ENCODE measurements at regions of chr1 and their contacts with region 1.

Region 1: DNA sequence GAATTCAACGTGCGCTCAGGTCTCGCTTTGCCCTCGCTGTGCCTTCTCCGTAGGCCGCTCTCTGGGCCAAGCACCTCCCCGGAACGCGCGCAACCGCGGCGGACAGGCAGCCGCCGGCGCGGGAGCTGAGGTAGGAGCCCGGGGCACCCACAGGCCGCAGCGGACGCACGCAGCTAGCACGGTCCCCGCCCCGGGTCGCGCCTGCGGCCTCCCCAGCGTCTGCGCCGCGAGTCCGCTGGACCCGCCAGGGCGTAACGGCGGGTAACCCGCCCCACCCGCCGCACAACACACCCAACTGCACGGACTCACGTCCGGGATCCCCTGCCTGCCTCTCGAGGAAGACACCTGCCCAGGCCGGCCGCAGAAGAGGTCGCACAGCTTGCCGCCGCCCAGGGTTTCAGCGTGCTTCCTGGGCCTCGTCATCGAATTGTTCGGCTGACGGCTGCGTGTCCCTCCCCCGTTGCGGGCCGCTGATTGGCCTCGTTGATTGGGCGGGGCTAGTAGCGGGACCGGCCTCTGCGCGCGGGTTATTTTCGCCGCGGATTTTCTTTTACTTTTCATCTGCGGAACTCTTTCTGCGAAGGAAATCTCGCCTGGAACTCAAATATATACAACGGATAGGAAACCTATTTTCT is at the start of gene CLCC1:
- DNase-seq: peak; percentile 94
- H3K4me3 Mint-ChIP-seq: peak within 1 kb of the TSS; percentile 86
- H3K27ac Mint-ChIP-seq: peak within 1 kb of the TSS; percentile 83
- H3K4me1 Mint-ChIP-seq: peaks cover 18% of the 10 kb centered on the region
- H3K27me3 Mint-ChIP-seq: no peaks in the 10 kb centered on the region
- CTCF ChIP-seq: no peak
- total RNA-seq, gene CLCC1: 36.6 and 46.3 TPM in 2 replicates

Region 2: DNA sequence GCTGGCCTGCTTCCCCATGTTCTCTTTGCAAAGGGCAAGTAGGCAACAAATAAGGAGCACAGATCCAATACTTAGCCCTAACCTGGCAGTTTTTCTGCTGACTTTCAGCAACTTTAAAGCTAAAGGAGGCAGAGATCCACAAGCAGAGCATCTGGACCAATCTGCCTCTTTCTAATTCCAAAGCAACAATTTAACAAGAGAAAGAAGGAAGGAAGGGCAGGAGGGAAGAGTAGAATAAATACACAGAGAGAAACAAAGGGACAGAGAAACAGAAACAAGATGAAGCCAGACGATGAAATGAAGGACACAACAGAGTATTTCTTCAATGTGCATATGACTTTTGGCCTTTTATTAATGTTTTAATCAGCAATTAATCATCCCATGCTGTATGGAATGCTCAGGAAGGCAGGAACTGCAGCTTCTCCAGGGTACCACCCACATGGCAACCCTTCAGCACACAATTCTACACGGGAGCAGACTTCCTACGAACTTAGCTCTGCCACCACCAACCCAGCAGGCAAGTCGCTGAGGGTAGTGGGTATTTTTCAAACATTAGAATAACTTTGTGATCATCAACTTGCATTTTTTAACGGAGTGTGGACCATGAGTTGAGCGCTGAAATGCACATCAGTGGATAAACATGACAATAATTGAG is 15.2 kb before region 1 on chr1:
- CTCF ChIA-PET with region 1: interaction called, 7 read pairs
- POLR2A ChIA-PET with region 1: interaction called, 33 read pairs
- intact Hi-C with region 1: no loop called
- DNase-seq: no peak
- H3K4me3 Mint-ChIP-seq: no peak overlapping the region
- H3K27ac Mint-ChIP-seq: no peak overlapping the region
- H3K4me1 Mint-ChIP-seq: peaks cover 8% of the 10 kb centered on the region
- H3K27me3 Mint-ChIP-seq: no peaks in the 10 kb centered on the region
- CTCF ChIP-seq: no peak

Region 3: DNA sequence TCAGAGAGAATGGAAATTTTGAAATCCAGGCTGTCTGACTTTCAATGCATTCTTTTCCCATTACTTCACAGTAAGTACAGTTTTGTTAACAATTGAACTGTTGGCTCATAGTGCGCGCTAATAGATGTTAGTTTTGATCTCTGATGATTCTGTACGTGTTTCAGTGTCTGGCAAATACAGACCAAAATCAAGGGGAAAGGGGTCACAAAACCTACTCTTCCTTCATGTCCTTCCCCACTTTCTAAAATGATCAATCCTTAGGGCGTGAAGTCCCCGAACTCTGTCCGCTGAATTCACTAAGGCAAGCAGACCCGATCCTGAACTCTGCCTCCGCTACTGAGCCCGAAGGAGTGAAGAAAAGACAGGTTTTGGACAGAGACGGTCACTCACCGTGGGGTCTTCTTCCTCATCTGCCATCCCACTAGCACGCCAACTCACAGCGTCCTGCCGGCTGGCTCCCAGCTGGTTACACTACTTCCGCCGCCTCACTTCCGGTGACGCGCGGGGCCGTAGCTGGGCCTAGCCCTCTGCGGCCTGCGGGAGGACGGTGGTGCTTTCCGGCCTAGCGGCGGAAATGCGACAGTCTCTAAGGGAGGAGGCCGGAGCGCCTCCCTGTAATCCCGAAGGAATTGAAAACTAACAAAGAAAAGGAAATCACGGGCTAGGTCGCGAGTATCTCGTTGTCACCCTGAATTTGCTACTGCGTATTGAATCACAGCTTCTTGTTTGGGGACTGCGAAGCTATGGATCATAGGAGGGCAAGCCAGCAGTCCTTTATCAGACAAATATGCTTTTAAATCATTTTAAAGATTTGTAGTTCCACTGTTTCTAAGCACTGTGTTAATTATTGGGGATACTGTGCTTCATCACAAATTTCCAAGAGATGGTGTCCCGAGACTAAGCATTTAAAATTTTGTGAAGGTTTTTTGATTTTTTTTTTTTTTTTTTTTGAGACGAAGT is 112.6 kb after region 1 on chr1 and contains the start of gene TAF13:
- CTCF ChIA-PET with region 1: interaction called, 5 read pairs
- POLR2A ChIA-PET with region 1: interaction called, 12 read pairs
- intact Hi-C with region 1: loop called (anchors 2 kb)
- DNase-seq: peak; percentile 93
- H3K4me3 Mint-ChIP-seq: peak within 1 kb of the TSS; percentile 99
- H3K27ac Mint-ChIP-seq: peak within 1 kb of the TSS; percentile 100
- H3K4me1 Mint-ChIP-seq: peaks cover 5% of the 10 kb centered on the region
- H3K27me3 Mint-ChIP-seq: no peaks in the 10 kb centered on the region
- CTCF ChIP-seq: no peak
- total RNA-seq, gene TAF13: 76.7 and 88.2 TPM in 2 replicates

Region 4: GRCh38 chr1:109151164-109151990 is 188.2 kb after region 1 on chr1:
- CTCF ChIA-PET with region 1: no interaction called
- POLR2A ChIA-PET with region 1: no interaction called
- intact Hi-C with region 1: no loop called
- DNase-seq: peak; percentile 66
- H3K4me3 Mint-ChIP-seq: no peak overlapping the region
- H3K27ac Mint-ChIP-seq: peak overlapping the region; percentile 23
- H3K4me1 Mint-ChIP-seq: peaks cover 6% of the 10 kb centered on the region
- H3K27me3 Mint-ChIP-seq: no peaks in the 10 kb centered on the region
- CTCF ChIP-seq: no peak